ENCODE measurements at regions of chr3 and their contacts with region 1.

Region 1: GRCh38 chr3:171614318-171614921 is 154.2 kb upstream of the TNIK start:
- DNase-seq: peak; percentile 68
- ATAC-seq: peak; percentile 96
- H3K4me3 Mint-ChIP-seq: no peak overlapping the region
- H3K27ac Mint-ChIP-seq: no peak overlapping the region
- H3K4me1 Mint-ChIP-seq: no peaks in the 10 kb centered on the region
- H3K27me3 Mint-ChIP-seq: no peaks in the 10 kb centered on the region
- CTCF ChIP-seq: peak; percentile 45; the same call in 1 of the 2 replicates

Region 2: DNA sequence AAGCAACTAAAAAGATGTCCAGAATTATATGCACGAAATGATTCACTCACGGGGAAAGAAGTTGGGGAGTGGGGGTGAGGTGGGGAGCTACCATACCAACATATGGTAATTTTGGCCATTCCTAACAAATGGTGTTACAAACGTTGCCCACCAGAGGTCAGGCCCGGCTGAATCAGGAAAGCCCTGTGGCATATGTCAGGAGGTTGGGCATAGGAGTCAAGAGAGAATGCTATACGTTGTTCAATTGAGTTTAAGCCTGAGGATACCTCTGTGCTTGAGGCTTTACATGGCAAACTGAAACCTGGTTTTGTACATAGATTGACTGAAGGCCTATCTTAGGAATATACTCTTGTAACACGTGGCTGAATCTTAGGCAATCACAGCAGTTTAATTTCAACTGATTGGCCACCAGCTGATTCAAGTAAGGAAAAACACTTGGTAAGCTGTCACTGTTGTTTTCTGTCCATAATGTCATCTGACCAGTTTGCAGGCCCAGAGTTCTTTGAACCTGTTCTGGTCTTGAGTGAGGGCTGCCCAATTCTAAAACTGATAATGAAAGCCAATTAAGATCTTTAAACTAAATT is 564.5 kb before region 1 on chr3:
- CTCF ChIA-PET with region 1: interaction called, 16 read pairs
- POLR2A ChIA-PET with region 1: no interaction called
- DNase-seq: peak; percentile 73
- ATAC-seq: peak; percentile 97
- H3K4me3 Mint-ChIP-seq: no peak overlapping the region
- H3K27ac Mint-ChIP-seq: no peak overlapping the region
- H3K4me1 Mint-ChIP-seq: peaks cover 6% of the 10 kb centered on the region
- H3K27me3 Mint-ChIP-seq: no peaks in the 10 kb centered on the region; the same call in 1 of the 2 replicates
- CTCF ChIP-seq: peak; percentile 45; the same call in 1 of the 2 replicates

Region 3: GRCh38 chr3:171543759-171544654 is 70.4 kb before region 1 on chr3:
- CTCF ChIA-PET with region 1: no interaction called
- POLR2A ChIA-PET with region 1: no interaction called
- DNase-seq: no peak
- ATAC-seq: peak; percentile 66
- H3K4me3 Mint-ChIP-seq: no peak overlapping the region
- H3K27ac Mint-ChIP-seq: no peak overlapping the region
- H3K4me1 Mint-ChIP-seq: no peaks in the 10 kb centered on the region
- H3K27me3 Mint-ChIP-seq: no peaks in the 10 kb centered on the region
- CTCF ChIP-seq: no peak

Region 4: GRCh38 chr3:171640520-171641412 is 26.3 kb after region 1 on chr3:
- CTCF ChIA-PET with region 1: interaction called, 12 read pairs
- POLR2A ChIA-PET with region 1: no interaction called
- DNase-seq: peak; percentile 23
- ATAC-seq: peak; percentile 98
- H3K4me3 Mint-ChIP-seq: no peak overlapping the region
- H3K27ac Mint-ChIP-seq: no peak overlapping the region
- H3K4me1 Mint-ChIP-seq: no peaks in the 10 kb centered on the region
- H3K27me3 Mint-ChIP-seq: no peaks in the 10 kb centered on the region
- CTCF ChIP-seq: no peak

Region 5: DNA sequence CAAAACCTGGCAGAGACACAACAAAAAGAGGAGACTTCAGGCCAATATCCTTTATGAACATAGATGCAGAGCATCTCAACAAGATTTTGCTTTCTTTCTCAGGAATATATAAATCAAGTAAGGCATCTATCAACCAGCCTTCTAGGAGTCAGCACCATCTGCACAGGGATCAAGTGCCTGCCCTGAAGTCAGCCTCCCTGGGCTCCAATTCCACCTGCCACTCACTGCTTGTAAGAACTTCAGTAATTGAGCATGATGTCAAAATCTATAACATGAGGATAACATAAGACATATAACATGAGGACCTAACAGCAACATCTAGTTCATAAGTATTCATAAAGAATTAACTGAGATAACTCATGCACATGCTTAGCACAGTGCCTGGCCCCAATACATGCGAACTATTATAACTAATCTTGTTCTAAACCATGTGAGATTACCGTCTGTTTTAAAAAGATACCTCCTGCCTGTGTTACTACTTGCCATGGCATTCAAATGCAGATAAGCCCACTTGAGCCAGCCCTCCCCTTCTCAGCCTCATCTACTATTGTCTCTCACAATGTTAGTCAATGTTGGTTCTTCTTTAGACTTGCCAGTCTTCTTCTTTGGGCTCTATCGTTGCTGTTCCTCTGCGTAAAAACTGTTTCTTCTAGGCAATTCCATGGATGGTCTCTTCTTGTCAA is 104.2 kb after region 1 on chr3:
- CTCF ChIA-PET with region 1: interaction called, 12 read pairs
- POLR2A ChIA-PET with region 1: no interaction called
- DNase-seq: peak; percentile 22
- ATAC-seq: peak; percentile 91
- H3K4me3 Mint-ChIP-seq: peak overlapping the region; percentile 9; the same call in 1 of the 2 replicates
- H3K27ac Mint-ChIP-seq: peak overlapping the region; percentile 15; the same call in 1 of the 2 replicates
- H3K4me1 Mint-ChIP-seq: peaks cover 36% of the 10 kb centered on the region
- H3K27me3 Mint-ChIP-seq: no peaks in the 10 kb centered on the region
- CTCF ChIP-seq: no peak

Measured in WTC11 (cell line).